H1 (cell line): ENCODE measurements at regions of chr10 and their contacts with region 1.

Region 1: GRCh38 chr10:48656241-48656913 is 28.3 kb upstream of the WDFY4 start:
- DNase-seq: peak; percentile 78 to 96
- H3K4me3 ChIP-seq: peak overlapping the region in 3 of 4 experiments; percentile 18 to 54 (median 32); a peak in 6 of 8 replicates
- H3K27ac ChIP-seq: no peak overlapping the region
- H3K4me1 ChIP-seq: peaks cover 0 to 12% (median 5%) of the 10 kb centered on the region in 4 experiments; a peak in 5 of 7 replicates
- H3K27me3 ChIP-seq: peaks cover 0 to 20% (median 9%) of the 10 kb centered on the region in 4 experiments; a peak in 5 of 7 replicates
- CTCF ChIP-seq: peak; percentile 96 to 99 (median 99)
- EP300 ChIP-seq: no peak
- POLR2A ChIP-seq: no peak
- RAD21 ChIP-seq: peak; percentile 83 to 90

Region 2: GRCh38 chr10:48444266-48444665 is 212.1 kb before region 1 on chr10:
- CTCF ChIA-PET with region 1: interaction called, 20 read pairs
- POLR2A ChIA-PET with region 1: no interaction called
- DNase-seq: peak in 1 of 2 experiments; percentile 48
- H3K4me3 ChIP-seq: no peak overlapping the region
- H3K27ac ChIP-seq: no peak overlapping the region
- H3K4me1 ChIP-seq: peaks cover 3 to 10% (median 8%) of the 10 kb centered on the region in 4 experiments; a peak in 5 of 7 replicates
- H3K27me3 ChIP-seq: no peaks in the 10 kb centered on the region
- CTCF ChIP-seq: peak in 2 of 3 experiments; percentile 64 to 71; a peak in 3 of 4 replicates
- EP300 ChIP-seq: no peak
- POLR2A ChIP-seq: no peak
- RAD21 ChIP-seq: peak; percentile 78 to 84

Region 3: GRCh38 chr10:48551861-48552591 is 104.4 kb before region 1 on chr10:
- CTCF ChIA-PET with region 1: interaction called, 105 read pairs
- POLR2A ChIA-PET with region 1: no interaction called
- DNase-seq: peak in 1 of 2 experiments; percentile 63
- H3K4me3 ChIP-seq: no peak overlapping the region
- H3K27ac ChIP-seq: no peak overlapping the region
- H3K4me1 ChIP-seq: peaks cover 0 to 8% (median 4%) of the 10 kb centered on the region in 4 experiments; a peak in 4 of 7 replicates
- H3K27me3 ChIP-seq: no peaks in the 10 kb centered on the region; a peak in 1 of 7 replicates
- CTCF ChIP-seq: peak; percentile 45 to 70 (median 68)
- EP300 ChIP-seq: no peak
- POLR2A ChIP-seq: no peak
- RAD21 ChIP-seq: peak; percentile 69 to 72

Region 4: DNA sequence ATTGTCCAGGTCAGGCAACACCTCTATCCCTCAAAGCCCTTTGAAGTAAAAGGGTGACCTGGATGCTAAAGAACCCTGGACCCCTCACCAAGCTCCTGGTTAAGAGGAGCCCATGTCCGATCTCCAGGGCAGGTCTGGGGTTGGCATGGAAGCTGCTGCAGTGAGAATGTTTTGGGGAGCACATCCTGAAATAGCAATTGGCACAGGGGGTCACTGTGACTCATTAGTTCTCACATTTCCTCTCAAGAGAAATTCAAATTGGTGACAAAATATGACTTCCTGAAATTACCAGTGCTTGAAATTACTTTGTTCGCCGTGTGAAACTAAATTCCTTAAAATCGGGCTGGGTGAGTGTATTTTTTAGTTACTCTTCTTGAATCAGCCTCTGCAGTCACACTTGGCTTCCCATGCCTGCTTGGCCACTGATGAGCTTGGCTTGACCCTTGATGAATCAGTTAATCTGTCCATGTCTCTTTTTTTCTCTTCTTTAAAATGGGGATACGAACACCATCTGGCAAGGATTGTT is 32.7 kb before region 1 on chr10:
- CTCF ChIA-PET with region 1: interaction called, 10 read pairs
- POLR2A ChIA-PET with region 1: no interaction called
- DNase-seq: no peak
- H3K4me3 ChIP-seq: no peak overlapping the region
- H3K27ac ChIP-seq: no peak overlapping the region
- H3K4me1 ChIP-seq: no peaks in the 10 kb centered on the region
- H3K27me3 ChIP-seq: no peaks in the 10 kb centered on the region
- CTCF ChIP-seq: no peak
- EP300 ChIP-seq: no peak
- POLR2A ChIP-seq: no peak
- RAD21 ChIP-seq: no peak

Region 5: GRCh38 chr10:48683868-48684267 is 27.5 kb after region 1 on chr10:
- CTCF ChIA-PET with region 1: no interaction called
- POLR2A ChIA-PET with region 1: no interaction called
- DNase-seq: no peak
- H3K4me3 ChIP-seq: no peak overlapping the region
- H3K27ac ChIP-seq: no peak overlapping the region
- H3K4me1 ChIP-seq: no peaks in the 10 kb centered on the region
- H3K27me3 ChIP-seq: no peaks in the 10 kb centered on the region
- CTCF ChIP-seq: no peak
- EP300 ChIP-seq: no peak
- POLR2A ChIP-seq: no peak
- RAD21 ChIP-seq: no peak

Region 6: GRCh38 chr10:48759113-48759901 is 102.9 kb after region 1 on chr10:
- CTCF ChIA-PET with region 1: interaction called, 15 read pairs
- POLR2A ChIA-PET with region 1: no interaction called
- DNase-seq: no peak
- H3K4me3 ChIP-seq: no peak overlapping the region
- H3K27ac ChIP-seq: no peak overlapping the region
- H3K4me1 ChIP-seq: no peaks in the 10 kb centered on the region
- H3K27me3 ChIP-seq: no peaks in the 10 kb centered on the region
- CTCF ChIP-seq: no peak
- EP300 ChIP-seq: no peak
- POLR2A ChIP-seq: no peak
- RAD21 ChIP-seq: no peak

Region 7: GRCh38 chr10:48904861-48905260 is 248.5 kb after region 1 on chr10:
- CTCF ChIA-PET with region 1: interaction called, 11 read pairs
- POLR2A ChIA-PET with region 1: no interaction called
- DNase-seq: no peak
- H3K4me3 ChIP-seq: no peak overlapping the region
- H3K27ac ChIP-seq: no peak overlapping the region
- H3K4me1 ChIP-seq: no peaks in the 10 kb centered on the region
- H3K27me3 ChIP-seq: no peaks in the 10 kb centered on the region
- CTCF ChIP-seq: no peak
- EP300 ChIP-seq: no peak
- POLR2A ChIP-seq: no peak
- RAD21 ChIP-seq: no peak

Region 8: DNA sequence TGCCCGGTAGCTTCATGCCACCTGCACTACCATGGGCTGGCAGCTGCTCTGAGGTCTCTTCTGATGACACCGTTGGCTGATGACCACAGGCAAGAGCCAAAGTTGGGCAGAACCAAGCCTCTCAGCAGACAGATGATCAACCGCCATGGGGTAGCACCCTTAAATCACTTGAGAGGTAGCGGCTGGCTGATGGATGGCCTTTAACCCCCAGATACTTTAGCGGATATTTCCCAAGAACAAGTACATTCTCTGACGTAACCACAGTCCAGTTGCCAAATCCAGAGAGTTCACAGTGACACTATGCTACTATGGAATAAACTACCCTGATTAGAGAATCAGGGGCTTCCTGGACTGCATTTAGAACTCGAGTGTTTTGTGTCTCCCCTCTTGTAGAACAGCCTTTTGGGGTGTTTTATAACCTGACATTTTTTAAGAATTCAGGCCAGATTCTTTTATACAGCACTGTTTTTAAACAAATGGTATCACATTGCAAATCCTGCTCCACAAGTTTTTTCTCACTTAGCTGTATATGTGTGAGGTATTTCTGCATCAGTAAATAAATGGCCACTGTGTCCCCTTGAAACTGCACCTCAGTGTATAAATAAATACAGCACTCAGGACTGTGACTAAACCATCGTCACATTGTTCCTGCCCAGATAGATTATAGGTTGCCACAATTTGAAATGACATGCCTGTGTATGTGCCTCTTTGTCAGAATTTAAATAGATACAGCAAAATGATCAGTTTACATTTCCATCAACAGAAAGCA is 770.4 kb after region 1 on chr10:
- CTCF ChIA-PET with region 1: no interaction called
- POLR2A ChIA-PET with region 1: no interaction called
- DNase-seq: no peak
- H3K4me3 ChIP-seq: no peak overlapping the region
- H3K27ac ChIP-seq: no peak overlapping the region
- H3K4me1 ChIP-seq: no peaks in the 10 kb centered on the region
- H3K27me3 ChIP-seq: no peaks in the 10 kb centered on the region
- CTCF ChIP-seq: no peak
- EP300 ChIP-seq: no peak
- POLR2A ChIP-seq: no peak
- RAD21 ChIP-seq: no peak